Activated CD4-positive, alpha-beta memory T cell treated with anti-CD3 and anti-CD28 coated beads, Interleukin-2, amount 10 ng/mL, durations not matched to agents 7 days and 5 days (primary cell): ENCODE measurements at regions of chr1 and their contacts with region 1.

Region 1: DNA sequence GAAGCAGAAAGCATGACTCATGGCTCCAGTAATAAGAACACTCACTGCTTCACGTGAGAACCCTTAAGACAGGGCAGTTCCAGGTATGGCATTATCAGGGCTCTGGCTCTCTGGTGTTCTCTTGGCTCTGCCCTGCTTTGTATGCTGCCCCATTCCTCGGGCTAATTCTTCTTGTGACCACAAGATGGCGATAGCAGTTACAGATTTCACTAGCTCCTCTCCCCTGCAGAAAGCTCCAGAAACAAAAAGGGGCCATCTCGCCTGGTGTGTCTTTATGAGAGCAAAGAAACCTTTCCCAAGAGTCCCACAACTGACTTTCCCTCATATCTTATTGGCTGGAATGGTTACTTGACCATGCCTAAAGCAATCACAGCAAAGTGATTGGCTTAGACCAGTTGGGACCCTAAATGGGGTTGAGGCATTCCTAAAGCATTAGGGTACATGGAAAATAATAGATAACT is 60.1 kb downstream of the F3 start:
- DNase-seq: peak; percentile 32
- H3K4me3 Mint-ChIP-seq: no peak overlapping the region
- H3K27ac Mint-ChIP-seq: no peak overlapping the region
- H3K4me1 Mint-ChIP-seq: no peaks in the 10 kb centered on the region
- H3K27me3 Mint-ChIP-seq: no peaks in the 10 kb centered on the region

Region 2: GRCh38 chr1:94411237-94411636 is 70.3 kb before region 1 on chr1:
- CTCF ChIA-PET with region 1: no interaction called
- POLR2A ChIA-PET with region 1: no interaction called
- DNase-seq: no peak
- H3K4me3 Mint-ChIP-seq: no peak overlapping the region
- H3K27ac Mint-ChIP-seq: no peak overlapping the region
- H3K4me1 Mint-ChIP-seq: no peaks in the 10 kb centered on the region
- H3K27me3 Mint-ChIP-seq: peaks cover 34% of the 10 kb centered on the region

Region 3: GRCh38 chr1:94463765-94464330 is 17.7 kb before region 1 on chr1:
- CTCF ChIA-PET with region 1: interaction called, 11 read pairs
- POLR2A ChIA-PET with region 1: no interaction called
- DNase-seq: no peak
- H3K4me3 Mint-ChIP-seq: no peak overlapping the region
- H3K27ac Mint-ChIP-seq: no peak overlapping the region
- H3K4me1 Mint-ChIP-seq: no peaks in the 10 kb centered on the region
- H3K27me3 Mint-ChIP-seq: no peaks in the 10 kb centered on the region

Region 4: DNA sequence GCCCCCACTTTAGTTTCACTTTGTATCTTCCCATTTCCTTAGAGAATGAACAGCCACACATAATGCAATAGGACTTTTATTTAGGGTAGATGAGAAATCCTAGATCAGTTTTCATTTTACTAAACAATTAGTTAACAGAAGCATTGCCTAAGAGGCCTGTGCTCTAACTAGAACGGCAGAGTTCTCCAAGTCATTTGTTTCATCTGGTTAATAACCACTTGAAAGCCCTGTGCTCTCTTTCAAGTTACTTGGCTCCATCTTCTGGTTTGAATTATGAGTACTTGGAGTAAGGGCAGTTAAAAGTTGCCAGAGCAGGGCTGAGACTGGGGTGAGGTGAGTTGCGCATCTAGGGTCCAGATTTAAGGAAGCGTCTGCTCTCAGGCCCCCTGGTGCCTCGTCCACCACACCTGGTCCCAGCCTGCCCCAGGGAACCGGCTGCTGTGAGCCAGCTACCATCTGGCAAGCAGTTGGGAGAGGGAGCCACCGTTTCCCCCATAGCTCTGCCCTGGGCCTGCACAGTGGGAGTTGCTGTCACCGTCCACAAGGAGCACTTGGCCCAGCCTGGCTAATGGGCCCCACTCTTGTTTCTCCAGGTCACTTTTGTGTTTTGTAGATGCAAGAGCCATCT is 320.5 kb after region 1 on chr1:
- CTCF ChIA-PET with region 1: interaction called, 55 read pairs
- POLR2A ChIA-PET with region 1: no interaction called
- DNase-seq: no peak
- H3K4me3 Mint-ChIP-seq: peak overlapping the region; percentile 34
- H3K27ac Mint-ChIP-seq: no peak overlapping the region
- H3K4me1 Mint-ChIP-seq: peaks cover 14% of the 10 kb centered on the region
- H3K27me3 Mint-ChIP-seq: no peaks in the 10 kb centered on the region